Heart left ventricle (tissue), 16 donors: ENCODE measurements at regions of chr10 and their contacts with region 1.

Region 1: DNA sequence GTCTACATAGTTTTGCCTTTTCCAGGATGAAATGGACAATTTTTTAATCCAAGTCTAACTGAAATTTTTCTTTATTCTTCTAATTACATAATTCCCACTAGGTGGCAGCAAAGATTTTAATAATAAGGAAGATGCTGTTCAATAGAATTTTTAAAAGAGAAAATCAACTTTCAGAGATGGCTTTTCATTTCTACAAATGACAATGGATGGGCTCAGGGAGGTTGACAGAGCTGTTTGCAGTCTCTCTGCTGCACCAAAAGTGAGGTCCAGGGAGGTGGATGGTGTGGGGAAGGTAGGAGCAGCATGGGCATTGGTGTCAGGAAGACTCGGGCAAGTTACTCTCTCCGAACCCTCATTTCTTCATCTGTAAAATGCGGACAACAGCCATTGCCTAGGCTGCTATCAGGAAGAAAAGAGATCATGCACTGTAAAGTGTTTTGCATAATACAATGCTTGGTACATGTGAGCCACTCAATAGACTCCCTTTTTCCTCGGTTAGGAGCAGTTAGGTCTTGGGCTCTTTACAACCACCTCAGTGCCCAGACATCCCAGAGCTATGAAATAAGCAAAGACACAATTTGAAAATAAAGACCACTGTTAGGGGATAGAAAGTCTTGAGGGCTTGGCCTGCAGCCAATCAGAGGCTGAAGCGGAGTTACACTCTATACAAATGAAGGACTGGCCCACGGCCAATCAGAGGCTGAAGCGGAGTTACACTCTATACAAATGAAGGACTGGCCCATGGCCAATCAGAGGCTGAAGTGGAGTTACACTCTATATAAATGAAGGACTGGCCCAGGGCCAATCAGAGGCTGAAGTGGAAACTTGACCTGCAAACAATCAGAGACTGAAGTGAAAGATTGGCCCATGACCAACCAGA is 107.1 kb downstream of the ABLIM1 start:
- DNase-seq: peak; percentile 58 to 82 (median 72)
- ATAC-seq: peak; percentile 4 to 52 (median 49)
- H3K4me3 ChIP-seq: peak overlapping the region in 7 of 12 donors; percentile 3 to 33 (median 26)
- H3K27ac ChIP-seq: peak overlapping the region; percentile 59 to 89 (median 74)
- H3K4me1 ChIP-seq: peaks cover 0 to 93% (median 53%) of the 10 kb centered on the region in 12 donors
- H3K27me3 ChIP-seq: no peaks in the 10 kb centered on the region
- CTCF ChIP-seq: peak; percentile 25 to 67 (median 54)
- POLR2A ChIP-seq: no peak

Region 2: GRCh38 chr10:112631501-112632410 is 1919.2 kb before region 1 on chr10:
- intact Hi-C with region 1: no loop called
- DNase-seq: no peak
- ATAC-seq: no peak
- H3K4me3 ChIP-seq: no peak overlapping the region
- H3K27ac ChIP-seq: no peak overlapping the region
- H3K4me1 ChIP-seq: peaks cover 0 to 8% (median 0%) of the 10 kb centered on the region in 12 donors
- H3K27me3 ChIP-seq: no peaks in the 10 kb centered on the region
- CTCF ChIP-seq: no peak
- POLR2A ChIP-seq: no peak

Region 3: DNA sequence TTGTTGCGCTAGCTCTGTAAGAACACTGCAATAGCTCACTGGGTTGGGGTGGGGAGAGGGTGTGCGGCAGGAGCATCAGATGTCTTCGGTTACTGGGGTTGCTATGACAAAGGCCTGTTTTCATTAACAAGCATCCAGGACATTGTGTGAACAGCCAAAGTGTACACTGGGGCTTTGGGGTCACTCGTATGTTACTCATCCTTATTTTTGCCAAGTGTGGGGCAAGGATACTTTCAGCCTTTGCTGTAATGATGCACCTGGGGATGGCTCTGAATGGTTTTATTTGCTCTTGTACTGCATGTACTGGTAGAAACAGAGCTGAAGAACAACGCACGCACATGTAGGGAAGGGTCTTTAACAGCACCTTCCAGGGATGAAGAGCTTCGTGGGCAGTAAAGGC is 73.7 kb before region 1 on chr10:
- intact Hi-C with region 1: loop called in 4 of 10 experiments (anchors 5 kb)
- DNase-seq: peak in 1 of 5 donors; percentile 45
- ATAC-seq: peak; percentile 36 to 68 (median 56)
- H3K4me3 ChIP-seq: no peak overlapping the region
- H3K27ac ChIP-seq: peak overlapping the region in 11 of 12 donors; percentile 21 to 81 (median 54)
- H3K4me1 ChIP-seq: peaks cover 0 to 89% (median 43%) of the 10 kb centered on the region in 12 donors
- H3K27me3 ChIP-seq: no peaks in the 10 kb centered on the region
- CTCF ChIP-seq: no peak
- POLR2A ChIP-seq: peak in 1 of 2 donors; percentile 13

Region 4: DNA sequence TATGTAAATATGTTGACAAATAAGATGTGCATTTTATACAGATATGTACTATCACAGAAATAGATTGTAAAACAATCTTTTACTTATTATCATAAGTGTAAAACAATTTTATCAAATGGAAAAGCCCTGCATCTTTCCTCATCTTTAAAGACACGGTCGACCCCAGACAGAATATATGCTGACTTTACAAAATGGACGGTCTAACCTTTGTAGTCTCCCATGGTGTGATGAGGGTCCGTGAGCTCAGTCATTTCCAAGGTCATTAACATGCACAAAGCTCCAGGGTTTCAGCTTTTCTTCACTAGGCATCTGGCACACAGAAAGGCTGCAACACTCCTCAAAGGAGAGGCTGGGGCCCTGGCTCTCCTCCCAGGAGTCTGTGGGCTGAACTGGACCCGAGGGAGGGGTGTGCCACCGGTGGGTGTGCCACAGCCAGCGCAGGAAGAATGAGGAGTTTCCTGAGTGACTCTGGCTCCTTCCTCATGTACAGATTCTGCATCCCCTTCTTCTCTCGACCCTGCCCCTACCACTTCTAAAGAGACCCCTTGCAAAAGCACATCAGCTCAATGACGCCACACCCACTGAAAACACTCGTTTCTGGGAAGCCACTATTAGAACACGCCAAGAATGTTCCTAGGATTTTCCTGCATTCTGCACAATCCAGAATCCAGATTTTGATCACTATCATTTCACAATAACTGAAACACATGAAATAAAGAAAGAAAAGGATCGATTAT is 133.3 kb after region 1 on chr10:
- intact Hi-C with region 1: loop called in 6 of 10 experiments (anchors 2 to 10 kb)
- DNase-seq: peak; percentile 48 to 79 (median 72)
- ATAC-seq: peak; percentile 38 to 71 (median 64)
- H3K4me3 ChIP-seq: peak overlapping the region; percentile 21 to 61 (median 54)
- H3K27ac ChIP-seq: peak overlapping the region; percentile 77 to 94 (median 85)
- H3K4me1 ChIP-seq: peaks cover 16 to 87% (median 51%) of the 10 kb centered on the region in 12 donors
- H3K27me3 ChIP-seq: no peaks in the 10 kb centered on the region
- CTCF ChIP-seq: no peak
- POLR2A ChIP-seq: peak in 1 of 2 donors; percentile 21

Region 5: GRCh38 chr10:114703377-114704107 is 152.5 kb after region 1 on chr10:
- intact Hi-C with region 1: loop called in 5 of 10 experiments (anchors 5 to 10 kb)
- DNase-seq: no peak
- ATAC-seq: peak in 3 of 4 donors; percentile 53 to 64 (median 61)
- H3K4me3 ChIP-seq: no peak overlapping the region
- H3K27ac ChIP-seq: peak overlapping the region in 3 of 12 donors; percentile 13 to 26 (median 13)
- H3K4me1 ChIP-seq: peaks cover 3 to 43% (median 11%) of the 10 kb centered on the region in 12 donors
- H3K27me3 ChIP-seq: no peaks in the 10 kb centered on the region
- CTCF ChIP-seq: peak; percentile 45 to 72 (median 60)
- POLR2A ChIP-seq: no peak

Region 6: DNA sequence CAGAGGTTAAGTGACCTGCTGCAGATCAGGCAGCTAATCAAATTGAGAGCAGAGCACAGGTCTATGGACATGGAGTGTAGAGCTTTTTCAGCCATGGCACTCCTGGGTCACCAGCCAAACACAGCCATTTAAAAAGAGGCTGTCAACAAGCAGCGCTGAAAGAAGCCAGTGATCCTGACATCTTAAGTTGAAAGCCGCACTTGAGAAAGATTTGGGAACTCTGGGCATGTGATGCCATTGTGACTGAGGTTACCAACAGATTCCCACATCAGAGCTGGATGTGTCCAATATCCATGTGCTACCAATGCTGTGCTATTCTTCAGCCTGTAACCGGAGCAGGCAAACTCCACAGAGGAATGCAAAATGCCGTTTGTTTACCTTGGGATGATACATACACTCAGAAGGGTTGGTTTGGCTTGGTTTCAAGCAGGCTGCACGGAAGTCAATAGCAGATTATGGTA is 163.3 kb after region 1 on chr10:
- intact Hi-C with region 1: loop called in 2 of 10 experiments (anchors 5 kb)
- DNase-seq: peak in 4 of 5 donors; percentile 54 to 73 (median 62)
- ATAC-seq: peak; percentile 76 to 87 (median 82)
- H3K4me3 ChIP-seq: peak overlapping the region in 1 of 12 donors; percentile 4
- H3K27ac ChIP-seq: peak overlapping the region; percentile 64 to 90 (median 82)
- H3K4me1 ChIP-seq: peaks cover 15 to 94% (median 66%) of the 10 kb centered on the region in 12 donors
- H3K27me3 ChIP-seq: no peaks in the 10 kb centered on the region
- CTCF ChIP-seq: no peak
- POLR2A ChIP-seq: no peak

Region 7: GRCh38 chr10:114772496-114773196 is 221.7 kb after region 1 on chr10:
- intact Hi-C with region 1: loop called in 4 of 10 experiments (anchors 5 kb)
- DNase-seq: no peak
- ATAC-seq: no peak
- H3K4me3 ChIP-seq: no peak overlapping the region
- H3K27ac ChIP-seq: no peak overlapping the region
- H3K4me1 ChIP-seq: peaks cover 0 to 8% (median 4%) of the 10 kb centered on the region in 12 donors
- H3K27me3 ChIP-seq: peaks cover 0 to 9% (median 0%) of the 10 kb centered on the region in 9 donors
- CTCF ChIP-seq: no peak
- POLR2A ChIP-seq: no peak

Region 8: GRCh38 chr10:114795039-114795438 is 244.0 kb after region 1 on chr10:
- intact Hi-C with region 1: loop called in 2 of 10 experiments (anchors 5 kb)
- DNase-seq: no peak
- ATAC-seq: no peak
- H3K4me3 ChIP-seq: no peak overlapping the region
- H3K27ac ChIP-seq: no peak overlapping the region
- H3K4me1 ChIP-seq: no peaks in the 10 kb centered on the region
- H3K27me3 ChIP-seq: no peaks in the 10 kb centered on the region
- CTCF ChIP-seq: no peak
- POLR2A ChIP-seq: no peak